GM12878 (cell line): ENCODE measurements at regions of chr14 and their contacts with region 1.

Region 1: GRCh38 chr14:94036313-94037050 is 10.3 kb downstream of the OTUB2 start:
- DNase-seq: no peak
- ATAC-seq: peak; percentile 99
- H3K4me3 ChIP-seq: no peak overlapping the region
- H3K27ac ChIP-seq: no peak overlapping the region
- H3K4me1 ChIP-seq: no peaks in the 10 kb centered on the region
- H3K27me3 ChIP-seq: 0 out of 4 replicates have a peak, but pooled peaks cover 0 to 5% of the 10 kb centered on the region in 2 experiments
- CTCF ChIP-seq: peak; percentile 87 to 89 (median 88)
- EP300 ChIP-seq: no peak
- POLR2A ChIP-seq: no peak
- RAD21 ChIP-seq: peak; percentile 66

Region 2: GRCh38 chr14:93493054-93493453 is 543.4 kb before region 1 on chr14:
- CTCF ChIA-PET with region 1: no interaction called
- POLR2A ChIA-PET with region 1: no interaction called
- RAD21 ChIA-PET with region 1: no interaction called
- SMC1A ChIA-PET with region 1: no interaction called
- in situ Hi-C with region 1: no loop called
- intact Hi-C with region 1: no loop called
- DNase-seq: no peak
- ATAC-seq: no peak
- H3K4me3 ChIP-seq: no peak overlapping the region
- H3K27ac ChIP-seq: no peak overlapping the region
- H3K4me1 ChIP-seq: no peaks in the 10 kb centered on the region
- H3K27me3 ChIP-seq: no peaks in the 10 kb centered on the region
- CTCF ChIP-seq: no peak
- EP300 ChIP-seq: no peak
- POLR2A ChIP-seq: no peak
- RAD21 ChIP-seq: no peak

Region 3: DNA sequence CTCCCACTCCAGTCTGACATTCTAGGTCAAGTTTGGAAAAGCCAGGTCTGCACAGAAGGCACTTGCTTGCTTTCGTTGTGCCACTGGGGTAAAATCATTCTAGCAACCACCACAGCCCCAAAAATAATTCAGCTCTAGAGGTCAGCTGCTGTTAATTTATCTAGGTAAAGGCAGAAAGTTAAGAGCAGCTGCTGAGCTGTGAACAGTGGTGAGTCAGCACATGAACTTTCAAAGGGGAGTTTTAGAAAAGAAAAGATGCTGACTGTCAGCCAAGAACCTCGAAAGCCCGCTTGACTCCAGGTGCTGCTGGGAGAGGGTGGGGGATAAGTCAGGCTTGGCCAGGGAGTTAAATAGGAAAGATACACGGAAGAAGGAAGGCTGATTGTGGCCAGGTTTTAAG is 26.7 kb before region 1 on chr14:
- CTCF ChIA-PET with region 1: interaction called, 5 read pairs
- POLR2A ChIA-PET with region 1: no interaction called
- RAD21 ChIA-PET with region 1: interaction called, 5 read pairs
- SMC1A ChIA-PET with region 1: interaction called, 26 read pairs
- in situ Hi-C with region 1: no loop called
- intact Hi-C with region 1: no loop called
- DNase-seq: peak; percentile 25
- ATAC-seq: peak; percentile 86
- H3K4me3 ChIP-seq: no peak overlapping the region; the same call in 1 of the 2 replicates
- H3K27ac ChIP-seq: peak overlapping the region; percentile 20; the same call in 1 of the 2 replicates
- H3K4me1 ChIP-seq: peaks cover 36% of the 10 kb centered on the region
- H3K27me3 ChIP-seq: no peaks in the 10 kb centered on the region
- CTCF ChIP-seq: no peak
- EP300 ChIP-seq: peak; percentile 10 to 57; a peak in 1 of 4 replicates
- POLR2A ChIP-seq: no peak
- RAD21 ChIP-seq: no peak

Region 4: GRCh38 chr14:94021001-94021400 is 15.5 kb before region 1 on chr14:
- CTCF ChIA-PET with region 1: interaction called, 34 read pairs
- POLR2A ChIA-PET with region 1: interaction called, 4 read pairs
- RAD21 ChIA-PET with region 1: interaction called, 5 read pairs
- SMC1A ChIA-PET with region 1: interaction called, 26 read pairs
- in situ Hi-C with region 1: no loop called
- intact Hi-C with region 1: no loop called
- DNase-seq: no peak
- ATAC-seq: 0 out of 3 replicates have a peak, but pooled peaks have one; percentile 11
- H3K4me3 ChIP-seq: no peak overlapping the region
- H3K27ac ChIP-seq: no peak overlapping the region
- H3K4me1 ChIP-seq: peaks cover 10% of the 10 kb centered on the region
- H3K27me3 ChIP-seq: peaks cover 0 to 2% of the 10 kb centered on the region in 2 experiments; a peak in 1 of 4 replicates
- CTCF ChIP-seq: no peak
- EP300 ChIP-seq: no peak
- POLR2A ChIP-seq: no peak
- RAD21 ChIP-seq: no peak

Region 5: DNA sequence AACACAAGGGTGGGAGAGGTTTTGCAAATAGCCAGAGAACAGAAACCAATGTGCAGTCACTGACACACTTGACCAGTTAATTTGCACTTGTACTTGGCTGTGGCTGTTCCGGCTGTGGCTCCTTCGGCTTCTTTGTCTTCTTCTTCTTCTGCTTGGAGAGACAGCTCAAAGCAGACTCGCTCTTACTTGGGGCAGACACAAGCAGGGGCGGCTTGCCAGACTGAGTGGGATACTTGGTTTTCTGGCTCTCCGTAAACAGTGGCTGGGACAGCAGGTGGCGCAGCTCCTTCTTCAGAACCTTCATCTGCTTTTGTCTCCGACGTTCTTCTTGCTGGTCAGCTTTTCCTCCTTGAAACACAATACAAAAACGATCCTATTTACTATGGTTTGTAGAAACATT is 14.6 kb after region 1 on chr14:
- CTCF ChIA-PET with region 1: interaction called, 34 read pairs
- POLR2A ChIA-PET with region 1: no interaction called
- RAD21 ChIA-PET with region 1: no interaction called
- SMC1A ChIA-PET with region 1: interaction called, 5 read pairs
- in situ Hi-C with region 1: no loop called
- intact Hi-C with region 1: no loop called
- DNase-seq: no peak
- ATAC-seq: no peak
- H3K4me3 ChIP-seq: no peak overlapping the region
- H3K27ac ChIP-seq: no peak overlapping the region
- H3K4me1 ChIP-seq: no peaks in the 10 kb centered on the region
- H3K27me3 ChIP-seq: no peaks in the 10 kb centered on the region
- CTCF ChIP-seq: no peak; a peak in 1 of 6 replicates
- EP300 ChIP-seq: no peak
- POLR2A ChIP-seq: no peak
- RAD21 ChIP-seq: no peak

Region 6: DNA sequence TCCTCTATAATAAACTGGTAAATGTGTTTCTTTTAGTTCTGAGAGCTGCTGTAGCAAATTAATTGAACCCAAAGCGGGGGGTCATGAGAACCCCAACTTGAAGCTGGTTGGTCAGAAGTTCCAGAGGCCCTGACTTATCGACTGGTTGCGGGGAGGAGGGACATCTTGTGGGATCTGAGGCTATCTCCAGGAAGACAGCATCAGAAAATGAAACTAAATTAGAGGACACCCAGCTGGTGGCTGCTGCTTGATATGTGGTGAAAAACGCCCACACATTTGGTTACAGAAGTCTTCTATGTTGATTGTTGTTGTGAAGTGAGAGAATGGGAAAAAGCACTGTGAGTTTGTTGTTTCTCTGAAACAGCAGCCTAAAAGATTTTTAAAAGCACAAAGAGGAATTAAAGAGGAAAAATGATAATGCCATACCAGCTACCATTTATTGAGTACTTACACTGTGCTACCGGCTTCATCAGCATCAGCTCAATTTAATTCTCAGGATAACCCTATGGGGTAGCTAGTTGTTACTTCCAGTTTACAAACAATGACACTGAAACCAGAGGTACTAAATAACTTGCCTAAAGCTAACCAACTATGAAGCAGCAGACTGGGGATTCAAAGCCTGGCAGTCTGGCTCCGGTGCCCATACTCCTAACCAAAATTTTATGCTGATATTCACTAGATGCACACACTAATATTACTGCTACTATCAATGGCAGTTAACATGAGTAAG is 20.3 kb after region 1 on chr14:
- CTCF ChIA-PET with region 1: interaction called, 34 read pairs
- POLR2A ChIA-PET with region 1: no interaction called
- RAD21 ChIA-PET with region 1: interaction called, 4 read pairs
- SMC1A ChIA-PET with region 1: interaction called, 4 read pairs
- in situ Hi-C with region 1: no loop called
- intact Hi-C with region 1: no loop called
- DNase-seq: peak; percentile 37
- ATAC-seq: peak; percentile 81
- H3K4me3 ChIP-seq: no peak overlapping the region
- H3K27ac ChIP-seq: peak overlapping the region; percentile 43; the same call in 1 of the 2 replicates
- H3K4me1 ChIP-seq: peaks cover 26% of the 10 kb centered on the region
- H3K27me3 ChIP-seq: no peaks in the 10 kb centered on the region
- CTCF ChIP-seq: no peak
- EP300 ChIP-seq: 0 out of 4 replicates have a peak, but pooled peaks of 1 of the 2 experiments have one; percentile 22
- POLR2A ChIP-seq: no peak
- RAD21 ChIP-seq: no peak

Region 7: GRCh38 chr14:94080471-94081289 is 44.2 kb after region 1 on chr14 and contains the start of gene DDX24:
- CTCF ChIA-PET with region 1: interaction called, 17 read pairs
- POLR2A ChIA-PET with region 1: no interaction called
- RAD21 ChIA-PET with region 1: interaction called, 3 read pairs
- SMC1A ChIA-PET with region 1: interaction called, 5 read pairs
- in situ Hi-C with region 1: no loop called
- intact Hi-C with region 1: no loop called
- DNase-seq: peak; percentile 85
- ATAC-seq: peak; percentile 96
- H3K4me3 ChIP-seq: peak within 1 kb of the TSS; percentile 72
- H3K27ac ChIP-seq: peak within 1 kb of the TSS; percentile 96
- H3K4me1 ChIP-seq: peaks cover 3% of the 10 kb centered on the region
- H3K27me3 ChIP-seq: no peaks in the 10 kb centered on the region
- CTCF ChIP-seq: no peak
- EP300 ChIP-seq: no peak
- POLR2A ChIP-seq: peak; percentile 98
- RAD21 ChIP-seq: no peak
- polyA plus RNA-seq, gene DDX24: 137 to 176 TPM

Region 8: DNA sequence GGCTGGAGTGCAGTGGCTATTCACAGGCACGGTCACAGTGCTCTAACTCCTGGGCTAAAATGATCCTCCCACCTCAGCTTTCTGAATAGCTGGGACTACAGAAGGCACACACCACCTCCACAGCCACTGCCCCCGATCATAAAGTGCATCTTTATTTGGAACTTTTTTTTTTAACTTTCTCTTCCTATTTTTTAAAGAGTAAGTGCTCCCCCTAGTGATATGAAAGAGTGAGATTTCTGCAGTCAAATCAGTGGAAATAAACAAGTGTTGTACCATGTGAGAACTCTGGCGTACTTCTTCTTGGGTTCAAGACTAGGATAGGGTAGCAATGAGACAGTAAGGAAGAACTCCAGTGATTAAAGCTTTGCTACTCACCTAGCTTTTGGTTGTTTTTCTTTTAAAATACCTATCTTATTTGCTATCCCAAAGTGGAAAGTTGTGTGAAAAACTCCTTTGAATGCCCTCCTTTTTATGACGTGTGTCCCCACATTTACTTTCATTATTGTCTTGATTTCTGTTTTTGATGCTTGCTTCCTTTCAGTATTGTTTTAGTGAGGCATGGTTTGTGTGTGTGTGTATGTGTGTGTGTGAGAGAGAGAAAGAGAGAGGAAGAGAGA is 144.3 kb after region 1 on chr14:
- CTCF ChIA-PET with region 1: interaction called, 52 read pairs
- POLR2A ChIA-PET with region 1: no interaction called
- RAD21 ChIA-PET with region 1: interaction called, 9 read pairs
- SMC1A ChIA-PET with region 1: interaction called, 7 read pairs
- in situ Hi-C with region 1: loop called (anchors 5 kb)
- intact Hi-C with region 1: loop called (anchors 1 kb)
- DNase-seq: peak; percentile 20
- ATAC-seq: peak; percentile 92
- H3K4me3 ChIP-seq: peak overlapping the region; percentile 31; the same call in 1 of the 2 replicates
- H3K27ac ChIP-seq: no peak overlapping the region
- H3K4me1 ChIP-seq: no peaks in the 10 kb centered on the region
- H3K27me3 ChIP-seq: peaks cover 0 to 11% of the 10 kb centered on the region in 2 experiments; a peak in 2 of 4 replicates
- CTCF ChIP-seq: peak; percentile 44 to 60 (median 53); a peak in 5 of 6 replicates
- EP300 ChIP-seq: no peak
- POLR2A ChIP-seq: no peak
- RAD21 ChIP-seq: peak; percentile 64